IMR-90 (cell line): ENCODE measurements at regions of chr6 and their contacts with region 1.

Region 1: GRCh38 chr6:89080542-89081422 is at the start of gene PNRC1:
- DNase-seq: peak; percentile 98
- ATAC-seq: peak; percentile 86
- H3K4me3 ChIP-seq: peak within 1 kb of the TSS; percentile 77
- H3K27ac ChIP-seq: peak within 1 kb of the TSS; percentile 92
- H3K4me1 ChIP-seq: peaks cover 4% of the 10 kb centered on the region
- H3K27me3 ChIP-seq: no peaks in the 10 kb centered on the region
- CTCF ChIP-seq: 0 out of 2 replicates have a peak, but pooled peaks have one; percentile 4
- POLR2A ChIP-seq: peak; percentile 99
- RAD21 ChIP-seq: no peak
- total RNA-seq, gene PNRC1: 6.5 and 18.3 TPM in 2 replicates

Region 2: GRCh38 chr6:87154993-87155841 is 1925.6 kb before region 1 on chr6 and contains the start of gene ZNF292:
- CTCF ChIA-PET with region 1: no interaction called
- POLR2A ChIA-PET with region 1: no interaction called
- dilution Hi-C with region 1: no loop called
- in situ Hi-C with region 1: no loop called
- intact Hi-C with region 1: loop called (anchors 5 kb)
- DNase-seq: peak; percentile 97
- ATAC-seq: peak; percentile 84
- H3K4me3 ChIP-seq: peak within 1 kb of the TSS; percentile 68
- H3K27ac ChIP-seq: peak within 1 kb of the TSS; percentile 94
- H3K4me1 ChIP-seq: peaks cover 13% of the 10 kb centered on the region
- H3K27me3 ChIP-seq: no peaks in the 10 kb centered on the region
- CTCF ChIP-seq: no peak
- POLR2A ChIP-seq: peak; percentile 59
- RAD21 ChIP-seq: no peak; the same call in 1 of the 2 replicates
- total RNA-seq, gene ZNF292: 28.3 and 36.9 TPM in 2 replicates

Region 3: GRCh38 chr6:88683734-88684133 is 397.0 kb before region 1 on chr6:
- CTCF ChIA-PET with region 1: no interaction called
- POLR2A ChIA-PET with region 1: no interaction called
- dilution Hi-C with region 1: no loop called
- in situ Hi-C with region 1: no loop called
- intact Hi-C with region 1: no loop called
- DNase-seq: peak; percentile 36
- ATAC-seq: no peak
- H3K4me3 ChIP-seq: no peak overlapping the region
- H3K27ac ChIP-seq: no peak overlapping the region
- H3K4me1 ChIP-seq: no peaks in the 10 kb centered on the region
- H3K27me3 ChIP-seq: no peaks in the 10 kb centered on the region
- CTCF ChIP-seq: no peak
- POLR2A ChIP-seq: no peak
- RAD21 ChIP-seq: no peak

Region 4: DNA sequence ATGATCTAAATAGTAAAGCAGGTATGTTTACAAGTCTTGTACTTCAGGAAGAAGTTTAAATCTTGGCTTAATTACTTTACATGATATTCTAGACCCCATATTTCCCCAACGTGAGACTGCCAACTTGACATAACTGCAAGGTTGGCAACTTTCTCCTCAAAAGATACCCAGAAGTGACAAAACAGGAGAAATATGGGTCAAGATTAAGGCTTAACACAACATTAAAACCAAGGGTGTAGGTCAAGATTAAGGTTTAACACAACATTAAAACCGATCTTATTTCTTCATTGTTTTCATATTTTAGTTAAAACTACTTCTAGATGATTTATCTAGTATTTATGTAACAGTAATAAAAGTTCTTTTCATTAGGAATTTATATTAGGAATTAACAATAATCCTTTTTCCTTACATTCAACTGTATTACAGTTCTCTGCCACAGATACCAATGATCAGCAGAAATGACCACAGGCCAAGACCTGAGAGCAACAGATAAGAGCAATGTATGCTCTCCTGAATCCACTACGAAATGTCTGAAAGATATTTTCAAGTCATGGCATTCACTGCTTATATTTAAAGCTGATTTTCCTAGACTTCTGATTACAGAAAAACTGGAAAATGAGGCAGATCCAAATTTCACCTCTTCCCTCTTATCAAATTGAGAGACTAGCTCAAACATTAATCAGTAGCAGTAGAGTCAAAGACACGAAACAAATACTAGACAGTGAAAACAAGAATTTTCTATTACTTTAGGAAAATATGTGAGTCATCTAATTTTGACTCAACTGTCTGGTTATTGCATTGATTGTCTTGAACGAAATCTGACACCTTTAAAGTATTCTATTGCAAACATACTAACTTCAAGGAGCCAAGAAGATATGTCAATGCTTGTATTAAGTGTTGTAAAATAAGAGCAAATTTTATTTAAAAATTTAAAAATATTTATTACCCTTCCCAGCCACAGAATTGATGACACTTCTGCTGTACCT is 189.6 kb before region 1 on chr6:
- CTCF ChIA-PET with region 1: no interaction called
- POLR2A ChIA-PET with region 1: no interaction called
- dilution Hi-C with region 1: no loop called
- in situ Hi-C with region 1: no loop called
- intact Hi-C with region 1: no loop called
- DNase-seq: peak; percentile 20
- ATAC-seq: no peak
- H3K4me3 ChIP-seq: no peak overlapping the region
- H3K27ac ChIP-seq: no peak overlapping the region
- H3K4me1 ChIP-seq: no peaks in the 10 kb centered on the region
- H3K27me3 ChIP-seq: no peaks in the 10 kb centered on the region
- CTCF ChIP-seq: no peak
- POLR2A ChIP-seq: no peak
- RAD21 ChIP-seq: no peak

Region 5: GRCh38 chr6:88952065-88952973 is 128.5 kb before region 1 on chr6:
- CTCF ChIA-PET with region 1: no interaction called
- POLR2A ChIA-PET with region 1: no interaction called
- dilution Hi-C with region 1: no loop called
- in situ Hi-C with region 1: no loop called
- intact Hi-C with region 1: no loop called
- DNase-seq: peak; percentile 20
- ATAC-seq: no peak
- H3K4me3 ChIP-seq: no peak overlapping the region
- H3K27ac ChIP-seq: no peak overlapping the region
- H3K4me1 ChIP-seq: no peaks in the 10 kb centered on the region
- H3K27me3 ChIP-seq: no peaks in the 10 kb centered on the region
- CTCF ChIP-seq: no peak
- POLR2A ChIP-seq: no peak
- RAD21 ChIP-seq: no peak

Region 6: GRCh38 chr6:89024456-89024855 is 56.3 kb before region 1 on chr6:
- CTCF ChIA-PET with region 1: no interaction called
- POLR2A ChIA-PET with region 1: no interaction called
- dilution Hi-C with region 1: no loop called
- in situ Hi-C with region 1: no loop called
- intact Hi-C with region 1: no loop called
- DNase-seq: no peak
- ATAC-seq: no peak
- H3K4me3 ChIP-seq: no peak overlapping the region
- H3K27ac ChIP-seq: no peak overlapping the region
- H3K4me1 ChIP-seq: no peaks in the 10 kb centered on the region
- H3K27me3 ChIP-seq: peaks cover 3% of the 10 kb centered on the region; the same call in 1 of the 2 replicates
- CTCF ChIP-seq: no peak
- POLR2A ChIP-seq: no peak
- RAD21 ChIP-seq: no peak

Region 7: DNA sequence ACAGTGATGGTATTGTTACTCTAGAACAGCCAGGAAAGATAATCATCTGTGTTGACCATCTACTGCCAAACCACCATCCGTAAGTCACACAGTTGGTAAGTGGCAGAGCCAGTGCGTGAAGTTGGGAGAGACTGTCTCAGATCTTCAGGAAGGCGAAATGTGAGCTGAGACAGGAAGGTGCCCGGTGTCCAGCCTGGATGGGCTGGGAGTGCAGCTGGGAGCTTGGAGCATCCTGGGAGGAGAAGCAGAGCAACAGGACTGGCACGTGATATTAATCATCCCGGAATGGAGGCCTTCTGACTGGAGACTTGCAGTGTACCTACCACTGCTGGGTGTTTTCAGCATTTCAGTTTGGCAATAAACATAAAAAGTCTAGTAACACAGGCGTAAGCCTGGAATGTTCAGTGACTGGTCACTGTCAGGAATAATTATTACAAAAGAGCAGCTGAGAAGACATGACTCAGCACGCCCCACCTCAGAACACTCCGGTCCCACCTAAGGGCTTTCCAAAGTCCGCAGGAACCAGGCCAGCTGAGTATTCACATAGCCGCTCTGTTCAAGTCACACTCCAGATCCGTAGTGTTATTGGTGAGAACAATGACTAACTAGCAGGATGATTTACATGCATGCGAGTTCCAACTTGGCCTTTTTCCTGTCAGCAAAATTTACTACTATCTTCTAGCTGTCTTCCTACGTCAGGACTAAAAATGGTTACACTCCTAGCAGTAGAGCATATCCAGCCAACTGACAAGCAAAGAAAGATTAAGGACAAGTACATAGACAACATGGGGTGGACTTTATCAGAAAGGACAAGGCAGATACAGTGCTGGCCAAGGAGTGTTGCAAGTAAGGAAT is 45.3 kb before region 1 on chr6:
- CTCF ChIA-PET with region 1: no interaction called
- POLR2A ChIA-PET with region 1: no interaction called
- dilution Hi-C with region 1: no loop called
- in situ Hi-C with region 1: no loop called
- intact Hi-C with region 1: loop called (anchors 1 kb)
- DNase-seq: peak; percentile 95
- ATAC-seq: peak; percentile 89
- H3K4me3 ChIP-seq: peak overlapping the region; percentile 3; the same call in 1 of the 2 replicates
- H3K27ac ChIP-seq: peak overlapping the region; percentile 90
- H3K4me1 ChIP-seq: peaks cover 10% of the 10 kb centered on the region
- H3K27me3 ChIP-seq: no peaks in the 10 kb centered on the region
- CTCF ChIP-seq: no peak
- POLR2A ChIP-seq: no peak
- RAD21 ChIP-seq: no peak

Region 8: GRCh38 chr6:89117211-89118108 is 36.7 kb after region 1 on chr6 and contains the start of gene SRSF12:
- CTCF ChIA-PET with region 1: interaction called, 4 read pairs
- POLR2A ChIA-PET with region 1: no interaction called
- dilution Hi-C with region 1: no loop called
- in situ Hi-C with region 1: no loop called
- intact Hi-C with region 1: loop called (anchors 2 kb)
- DNase-seq: peak; percentile 19
- ATAC-seq: peak; percentile 88
- H3K4me3 ChIP-seq: peak within 1 kb of the TSS; percentile 50
- H3K27ac ChIP-seq: no peak within 1 kb of the TSS
- H3K4me1 ChIP-seq: no peaks in the 10 kb centered on the region
- H3K27me3 ChIP-seq: peaks cover 11% of the 10 kb centered on the region
- CTCF ChIP-seq: no peak
- POLR2A ChIP-seq: no peak
- RAD21 ChIP-seq: no peak
- total RNA-seq, gene SRSF12: 0.28 and 0.36 TPM in 2 replicates

Region 9: DNA sequence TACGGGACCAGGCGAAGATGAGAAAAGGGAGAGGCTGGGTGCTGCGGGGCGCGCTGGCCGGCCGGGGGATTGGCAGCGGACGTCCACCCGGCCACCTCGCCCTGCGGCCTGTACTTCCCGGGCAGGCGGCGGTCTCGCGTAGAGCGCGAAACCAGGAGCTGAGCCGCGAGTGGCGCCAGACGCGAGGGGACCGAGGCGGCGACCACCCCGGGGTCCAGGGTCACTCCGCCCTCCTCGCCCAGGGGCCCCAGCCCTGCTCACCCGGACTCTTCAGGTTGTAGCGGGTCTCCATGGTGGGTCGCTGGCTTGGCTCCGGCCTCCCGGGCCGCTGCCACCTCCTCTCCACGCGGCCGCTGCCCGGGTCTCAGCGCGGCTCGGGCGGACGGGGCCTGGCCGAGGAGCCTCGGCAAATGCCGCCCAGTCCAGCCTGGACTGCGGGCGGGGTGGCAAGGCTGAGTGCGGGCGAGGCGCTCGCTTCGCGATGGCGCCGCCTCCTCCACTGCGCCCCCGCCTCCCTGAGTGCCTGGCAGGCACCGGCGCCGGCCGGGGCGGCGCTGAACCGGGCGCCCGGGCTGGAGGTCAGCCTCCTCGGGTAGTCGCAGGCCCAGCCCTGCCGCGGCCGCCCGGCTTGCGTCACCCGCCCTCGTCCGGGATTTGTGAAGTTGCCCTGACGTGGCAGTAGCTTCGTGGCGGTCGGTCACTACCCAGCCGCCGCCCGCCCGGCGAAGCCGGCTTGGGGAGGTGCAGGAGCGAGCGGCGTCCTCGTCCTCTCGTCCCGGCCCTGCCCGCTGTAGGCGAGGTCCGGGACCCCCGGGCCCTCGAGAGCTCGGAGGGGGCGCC is 271.7 kb after region 1 on chr6 and contains the start of gene UBE2J1:
- CTCF ChIA-PET with region 1: no interaction called
- POLR2A ChIA-PET with region 1: no interaction called
- dilution Hi-C with region 1: no loop called
- in situ Hi-C with region 1: no loop called
- intact Hi-C with region 1: loop called (anchors 5 kb)
- DNase-seq: peak; percentile 94
- ATAC-seq: peak; percentile 96
- H3K4me3 ChIP-seq: peak within 1 kb of the TSS; percentile 99
- H3K27ac ChIP-seq: peak within 1 kb of the TSS; percentile 85
- H3K4me1 ChIP-seq: peaks cover 9% of the 10 kb centered on the region
- H3K27me3 ChIP-seq: no peaks in the 10 kb centered on the region
- CTCF ChIP-seq: no peak
- POLR2A ChIP-seq: peak; percentile 97
- RAD21 ChIP-seq: no peak
- total RNA-seq, gene UBE2J1: 35.3 and 37.8 TPM in 2 replicates